CD4-positive, alpha-beta memory T cell (primary cell): ENCODE measurements at regions of chr3 and their contacts with region 1.

Region 1: GRCh38 chr3:36868614-36869436 is 76.0 kb downstream of the TRANK1 start:
- DNase-seq: peak; percentile 46 to 57 (median 48)
- H3K4me3 ChIP-seq: no peak overlapping the region
- H3K4me3 Mint-ChIP-seq: peak overlapping the region in 3 of 8 donors; percentile 4 to 49 (median 31)
- H3K27ac ChIP-seq: no peak overlapping the region
- H3K27ac Mint-ChIP-seq: peak overlapping the region in 4 of 7 donors; percentile 45 to 83 (median 74)
- H3K4me1 ChIP-seq: peaks cover 10% of the 10 kb centered on the region
- H3K4me1 Mint-ChIP-seq: peaks cover 21 to 44% (median 35%) of the 10 kb centered on the region in 4 donors
- H3K27me3 ChIP-seq: no peaks in the 10 kb centered on the region
- H3K27me3 Mint-ChIP-seq: no peaks in the 10 kb centered on the region

Region 2: DNA sequence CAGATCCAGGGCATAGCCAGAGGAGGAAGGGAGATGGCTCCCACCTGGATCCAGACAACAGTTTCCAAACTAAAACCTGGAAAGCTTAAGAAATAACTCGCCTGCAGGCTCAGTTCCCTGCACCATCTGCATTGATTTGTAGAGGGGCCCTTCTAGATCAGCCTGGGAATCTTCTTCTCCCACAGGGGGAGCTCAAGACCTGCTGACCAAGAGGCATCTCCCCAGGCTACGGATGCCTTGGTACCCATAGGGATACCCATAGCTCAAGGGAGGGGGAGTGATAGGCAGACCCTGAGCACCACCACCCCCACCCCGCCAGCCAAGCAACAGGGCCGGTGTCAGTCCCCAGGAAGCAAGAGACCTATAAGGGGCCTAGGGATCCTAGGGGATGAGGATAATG is 76.5 kb before region 1 on chr3:
- CTCF ChIA-PET with region 1: interaction called, 5 read pairs
- POLR2A ChIA-PET with region 1: no interaction called
- intact Hi-C with region 1: loop called (anchors 2 kb)
- DNase-seq: peak in 1 of 5 donors; percentile 4
- H3K4me3 ChIP-seq: no peak overlapping the region
- H3K4me3 Mint-ChIP-seq: no peak overlapping the region
- H3K27ac ChIP-seq: no peak overlapping the region
- H3K27ac Mint-ChIP-seq: no peak overlapping the region
- H3K4me1 ChIP-seq: no peaks in the 10 kb centered on the region
- H3K4me1 Mint-ChIP-seq: no peaks in the 10 kb centered on the region
- H3K27me3 ChIP-seq: no peaks in the 10 kb centered on the region
- H3K27me3 Mint-ChIP-seq: peaks cover 0 to 1% of the 10 kb centered on the region in 2 donors

Region 3: GRCh38 chr3:36850743-36851142 is 18.1 kb before region 1 on chr3:
- CTCF ChIA-PET with region 1: interaction called, 52 read pairs
- POLR2A ChIA-PET with region 1: no interaction called
- intact Hi-C with region 1: no loop called
- DNase-seq: no peak
- H3K4me3 ChIP-seq: no peak overlapping the region
- H3K4me3 Mint-ChIP-seq: no peak overlapping the region
- H3K27ac ChIP-seq: no peak overlapping the region
- H3K27ac Mint-ChIP-seq: peak overlapping the region in 2 of 7 donors; percentile 40 to 47
- H3K4me1 ChIP-seq: no peaks in the 10 kb centered on the region
- H3K4me1 Mint-ChIP-seq: peaks cover 4 to 14% (median 6%) of the 10 kb centered on the region in 4 donors
- H3K27me3 ChIP-seq: no peaks in the 10 kb centered on the region
- H3K27me3 Mint-ChIP-seq: no peaks in the 10 kb centered on the region

Region 4: GRCh38 chr3:36904641-36905040 is 35.8 kb after region 1 on chr3:
- CTCF ChIA-PET with region 1: interaction called, 15 read pairs
- POLR2A ChIA-PET with region 1: interaction called, 8 read pairs
- intact Hi-C with region 1: no loop called
- DNase-seq: no peak
- H3K4me3 ChIP-seq: no peak overlapping the region
- H3K4me3 Mint-ChIP-seq: peak overlapping the region; percentile 33 to 78 (median 59)
- H3K27ac ChIP-seq: no peak overlapping the region
- H3K27ac Mint-ChIP-seq: peak overlapping the region in 6 of 7 donors; percentile 64 to 96 (median 76)
- H3K4me1 ChIP-seq: peaks cover 87% of the 10 kb centered on the region
- H3K4me1 Mint-ChIP-seq: peaks cover 57 to 88% (median 75%) of the 10 kb centered on the region in 4 donors
- H3K27me3 ChIP-seq: no peaks in the 10 kb centered on the region
- H3K27me3 Mint-ChIP-seq: no peaks in the 10 kb centered on the region

Region 5: GRCh38 chr3:36944012-36944640 is 75.3 kb after region 1 on chr3:
- CTCF ChIA-PET with region 1: interaction called, 10 read pairs
- POLR2A ChIA-PET with region 1: interaction called, 13 read pairs
- intact Hi-C with region 1: no loop called
- DNase-seq: peak; percentile 25 to 57 (median 34)
- H3K4me3 ChIP-seq: peak overlapping the region; percentile 21 to 80
- H3K4me3 Mint-ChIP-seq: peak overlapping the region; percentile 82 to 90 (median 86)
- H3K27ac ChIP-seq: peak overlapping the region; percentile 67
- H3K27ac Mint-ChIP-seq: peak overlapping the region; percentile 61 to 87 (median 80)
- H3K4me1 ChIP-seq: peaks cover 13% of the 10 kb centered on the region
- H3K4me1 Mint-ChIP-seq: peaks cover 7 to 43% (median 26%) of the 10 kb centered on the region in 4 donors
- H3K27me3 ChIP-seq: no peaks in the 10 kb centered on the region
- H3K27me3 Mint-ChIP-seq: no peaks in the 10 kb centered on the region

Region 6: DNA sequence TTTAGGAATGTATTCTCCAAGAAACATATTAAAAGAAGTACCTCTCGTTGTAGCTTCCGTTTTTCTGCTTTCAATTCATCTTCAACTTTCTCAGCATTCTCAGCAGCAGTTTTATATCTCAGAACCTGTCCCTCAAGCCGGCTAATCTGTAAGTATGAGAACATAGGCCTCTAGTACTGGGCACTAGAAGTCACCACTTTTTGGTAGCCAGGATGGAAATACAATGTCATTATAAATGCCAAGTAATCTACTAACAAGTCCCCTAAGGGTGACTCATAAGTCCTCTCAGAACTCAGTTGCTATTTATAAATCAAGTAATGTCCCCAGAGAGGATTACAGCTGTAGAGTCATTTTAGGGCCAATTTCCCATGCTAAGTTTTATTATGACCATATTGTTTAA is 185.5 kb after region 1 on chr3:
- CTCF ChIA-PET with region 1: no interaction called
- POLR2A ChIA-PET with region 1: no interaction called
- intact Hi-C with region 1: no loop called
- DNase-seq: no peak
- H3K4me3 ChIP-seq: no peak overlapping the region
- H3K4me3 Mint-ChIP-seq: no peak overlapping the region
- H3K27ac ChIP-seq: no peak overlapping the region
- H3K27ac Mint-ChIP-seq: peak overlapping the region in 4 of 7 donors; percentile 32 to 66 (median 58)
- H3K4me1 ChIP-seq: no peaks in the 10 kb centered on the region
- H3K4me1 Mint-ChIP-seq: peaks cover 0 to 4% (median under 1%) of the 10 kb centered on the region in 4 donors
- H3K27me3 ChIP-seq: no peaks in the 10 kb centered on the region
- H3K27me3 Mint-ChIP-seq: no peaks in the 10 kb centered on the region

Region 7: DNA sequence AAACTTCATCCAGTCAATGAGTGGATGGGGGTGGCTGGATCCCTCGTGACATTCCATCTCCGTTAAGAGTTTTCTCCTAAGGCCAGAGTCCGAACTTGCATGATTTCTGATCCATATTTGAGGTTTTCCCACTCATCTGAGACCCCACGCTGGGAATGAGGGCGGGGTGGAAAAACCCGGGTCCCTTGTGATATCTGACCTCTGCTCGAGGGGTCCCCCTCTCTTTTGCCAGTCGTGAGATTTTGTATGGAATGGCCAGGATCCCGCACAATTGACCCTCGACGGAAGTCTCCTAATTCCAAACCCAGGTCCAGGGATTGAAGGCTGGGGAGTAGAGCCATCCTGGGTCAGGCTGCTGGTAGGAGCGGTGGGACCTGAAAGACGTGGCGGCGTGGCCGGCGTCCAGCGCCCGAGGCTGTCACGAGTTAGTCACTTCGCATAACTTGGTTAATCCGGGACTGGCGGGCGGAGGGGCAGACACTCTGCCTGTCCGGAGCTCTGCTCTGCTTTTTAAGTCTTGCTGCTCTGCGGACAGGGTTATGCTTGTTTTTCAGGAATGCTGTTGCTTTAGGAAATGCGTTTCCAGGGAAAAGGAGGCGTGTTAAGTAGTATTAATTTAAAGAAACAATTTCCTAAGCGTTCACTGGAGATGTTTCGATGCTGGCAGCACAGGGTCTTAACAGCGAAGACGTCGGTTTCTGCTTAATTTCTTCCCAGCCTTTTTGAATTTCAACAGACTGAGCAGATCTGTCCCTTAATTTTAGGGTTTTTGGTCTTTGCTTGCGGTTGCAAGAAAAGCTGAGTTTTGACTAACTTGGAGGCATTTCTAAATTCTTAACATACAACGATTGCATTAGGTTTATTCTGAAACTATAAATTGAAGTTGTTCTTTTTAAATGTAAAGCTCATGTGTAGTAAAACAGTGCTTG is 375.3 kb after region 1 on chr3:
- CTCF ChIA-PET with region 1: no interaction called
- POLR2A ChIA-PET with region 1: no interaction called
- intact Hi-C with region 1: no loop called
- DNase-seq: peak in 3 of 5 donors; percentile 13 to 51 (median 18)
- H3K4me3 ChIP-seq: peak overlapping the region; percentile 72 to 92
- H3K4me3 Mint-ChIP-seq: peak overlapping the region; percentile 95 to 99 (median 97)
- H3K27ac ChIP-seq: peak overlapping the region; percentile 94
- H3K27ac Mint-ChIP-seq: peak overlapping the region; percentile 95 to 99 (median 98)
- H3K4me1 ChIP-seq: peaks cover 64% of the 10 kb centered on the region
- H3K4me1 Mint-ChIP-seq: peaks cover 39 to 63% (median 50%) of the 10 kb centered on the region in 4 donors
- H3K27me3 ChIP-seq: no peaks in the 10 kb centered on the region
- H3K27me3 Mint-ChIP-seq: no peaks in the 10 kb centered on the region